AG04449 (cell line): ENCODE measurements at regions of chr2 and their contacts with region 1.

Region 1: GRCh38 chr2:234135720-234136221 is 85.3 kb downstream of the SPP2 start:
- DNase-seq: peak; percentile 31
- H3K4me3 ChIP-seq: no peak overlapping the region
- CTCF ChIP-seq: peak; percentile 72

Region 2: GRCh38 chr2:233976690-233977294 is 159.0 kb before region 1 on chr2:
- CTCF ChIA-PET with region 1: interaction called, 22 read pairs
- POLR2A ChIA-PET with region 1: interaction called, 3 read pairs
- DNase-seq: peak; percentile 17
- H3K4me3 ChIP-seq: no peak overlapping the region
- CTCF ChIP-seq: peak; percentile 49

Region 3: DNA sequence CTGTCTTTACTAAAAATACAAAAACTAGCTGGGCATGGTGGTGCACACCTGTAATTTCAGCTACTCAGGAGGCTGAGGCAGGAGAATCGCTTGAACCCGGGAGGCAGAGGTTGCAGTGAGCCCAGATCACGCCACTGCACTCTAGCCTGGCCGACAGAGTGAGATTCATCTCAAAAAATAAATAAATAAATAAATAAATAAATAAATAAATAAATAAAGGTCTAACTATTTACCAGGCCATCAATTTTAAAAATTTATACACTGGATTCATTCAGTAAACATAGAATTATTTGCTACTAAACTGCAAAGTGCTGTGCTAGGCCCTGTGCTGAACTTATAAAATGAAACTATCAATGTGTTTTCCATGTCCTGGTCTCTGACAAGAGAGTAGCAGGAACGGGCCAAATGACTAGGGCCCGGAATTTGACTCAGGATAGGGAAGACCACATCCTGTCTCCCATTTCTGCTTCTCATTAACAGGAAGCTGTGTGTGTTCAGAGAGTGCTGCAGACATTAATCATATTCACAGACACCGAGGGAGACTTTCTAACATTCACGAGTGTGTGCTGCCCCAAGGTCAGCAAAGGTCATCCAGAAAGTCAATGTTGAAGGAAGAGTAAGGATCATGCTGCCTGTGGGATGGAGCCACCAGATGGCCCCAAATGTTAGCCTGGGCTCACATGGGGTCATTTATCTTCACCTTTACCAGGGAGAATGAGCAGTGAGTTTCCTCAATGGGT is 10.5 kb after region 1 on chr2:
- CTCF ChIA-PET with region 1: interaction called, 11 read pairs
- POLR2A ChIA-PET with region 1: no interaction called
- DNase-seq: peak; percentile 55
- H3K4me3 ChIP-seq: no peak overlapping the region
- CTCF ChIP-seq: no peak

Region 4: DNA sequence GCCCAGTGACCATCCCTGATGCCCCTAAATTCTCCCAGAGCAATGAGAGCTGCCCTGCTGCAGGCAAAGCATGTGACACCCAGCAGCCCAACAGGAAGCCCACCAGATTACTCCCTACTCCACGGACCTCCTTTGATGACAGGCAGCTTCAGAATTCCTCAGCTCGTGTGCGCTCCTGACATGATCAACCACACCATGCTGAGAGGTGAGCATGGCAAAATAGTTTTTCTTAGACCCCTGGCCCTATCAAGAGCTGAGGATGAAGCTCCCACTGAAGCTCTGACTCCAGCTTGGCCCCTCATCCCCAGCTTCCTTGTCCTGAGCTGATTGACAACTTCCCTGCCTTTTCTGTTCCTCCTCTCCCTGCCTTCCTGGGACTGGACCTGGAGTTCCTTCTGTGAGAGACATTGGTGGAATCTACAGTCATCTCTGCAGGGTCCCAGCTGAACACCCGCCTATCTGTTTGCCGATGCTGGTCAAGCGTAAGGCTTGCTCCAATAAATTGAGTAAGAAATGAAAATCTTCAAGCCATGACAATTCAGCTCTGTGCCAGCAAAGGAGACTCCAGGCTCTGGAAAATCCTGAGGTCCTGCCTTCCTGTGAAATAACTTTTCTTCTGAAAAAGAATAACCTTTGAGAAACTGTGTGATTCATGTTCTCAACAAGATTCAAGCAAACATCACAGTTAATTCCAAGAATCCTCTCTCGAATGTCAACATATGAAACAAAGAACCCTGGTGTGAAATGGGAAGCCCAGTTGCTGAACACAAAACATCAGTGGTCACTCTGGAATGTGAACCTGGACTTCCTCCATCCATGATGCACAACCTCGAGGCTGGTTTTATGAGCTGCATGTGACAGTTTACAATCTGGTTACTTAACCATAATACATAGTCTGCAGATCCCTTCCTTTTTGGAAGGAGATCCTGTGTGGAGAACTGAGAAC is 115.8 kb after region 1 on chr2:
- CTCF ChIA-PET with region 1: interaction called, 50 read pairs
- POLR2A ChIA-PET with region 1: no interaction called
- DNase-seq: peak; percentile 93
- H3K4me3 ChIP-seq: no peak overlapping the region
- CTCF ChIP-seq: no peak

Region 5: DNA sequence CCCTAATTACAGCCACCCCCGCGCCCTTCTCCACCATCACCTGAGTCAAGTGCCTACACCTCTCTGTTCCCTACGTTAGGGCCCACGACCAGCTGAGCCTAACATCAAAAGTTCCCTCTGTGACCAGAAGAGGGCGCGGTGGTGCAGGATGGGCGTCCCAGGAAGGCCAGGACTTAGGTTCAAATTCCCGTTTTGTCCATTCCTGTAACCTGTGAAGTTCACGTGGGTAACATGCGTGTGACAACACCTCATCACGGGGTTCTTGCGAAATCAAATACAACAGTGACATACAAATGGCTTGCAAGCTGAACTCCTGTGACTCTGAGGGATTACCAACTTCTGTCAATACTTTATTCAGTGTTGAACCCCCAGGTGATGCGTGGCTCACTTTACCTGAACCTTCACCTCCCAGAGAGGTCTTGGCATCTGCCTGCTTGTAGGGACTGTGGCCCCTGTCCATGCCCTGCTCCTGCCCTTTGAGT is 153.2 kb after region 1 on chr2:
- CTCF ChIA-PET with region 1: interaction called, 26 read pairs
- POLR2A ChIA-PET with region 1: interaction called, 3 read pairs
- DNase-seq: no peak
- H3K4me3 ChIP-seq: no peak overlapping the region
- CTCF ChIP-seq: peak; percentile 74

Region 6: DNA sequence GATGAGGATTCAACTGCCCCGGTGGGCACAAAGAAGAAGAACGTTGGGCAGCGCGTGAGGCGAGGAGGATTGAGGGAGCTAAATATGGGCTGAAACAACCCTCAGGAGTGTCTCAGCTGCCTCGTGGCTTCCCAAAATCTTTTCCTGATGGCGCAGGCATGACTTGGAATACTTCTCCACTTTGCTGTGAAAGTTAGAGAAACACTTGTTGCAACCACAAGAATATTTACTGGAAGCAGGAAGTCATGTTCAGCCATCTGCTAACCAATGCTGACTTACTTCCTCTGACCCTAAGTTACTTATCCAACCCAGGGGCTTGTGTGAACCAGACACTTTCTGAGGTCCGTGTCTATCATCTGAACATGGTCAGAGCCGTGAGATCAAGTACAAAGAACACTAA is 212.3 kb after region 1 on chr2:
- CTCF ChIA-PET with region 1: no interaction called
- POLR2A ChIA-PET with region 1: no interaction called
- DNase-seq: no peak
- H3K4me3 ChIP-seq: no peak overlapping the region
- CTCF ChIP-seq: no peak

Region 7: DNA sequence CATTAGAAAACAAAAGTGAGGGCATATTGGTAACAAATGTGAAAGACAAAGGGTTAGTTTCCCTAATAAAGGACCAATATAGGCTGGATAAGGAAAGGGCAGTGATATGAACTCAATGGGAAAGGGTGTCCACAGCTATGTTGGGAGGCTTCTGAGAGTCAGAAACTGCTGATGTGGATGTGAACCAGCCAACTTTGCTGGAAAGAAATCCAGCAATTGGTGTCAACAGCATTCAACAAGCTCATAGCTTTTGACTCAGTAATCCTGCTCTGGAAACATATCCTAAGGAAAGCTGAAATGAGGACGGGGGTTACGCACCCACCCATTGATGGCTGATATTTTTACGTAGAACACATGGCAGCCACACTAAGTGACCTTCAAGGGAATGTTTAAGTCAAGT is 297.4 kb after region 1 on chr2:
- CTCF ChIA-PET with region 1: no interaction called
- POLR2A ChIA-PET with region 1: no interaction called
- DNase-seq: no peak
- H3K4me3 ChIP-seq: no peak overlapping the region
- CTCF ChIP-seq: no peak

Region 8: GRCh38 chr2:234500394-234501006 is 364.7 kb after region 1 on chr2:
- CTCF ChIA-PET with region 1: interaction called, 63 read pairs
- POLR2A ChIA-PET with region 1: interaction called, 3 read pairs
- DNase-seq: no peak
- H3K4me3 ChIP-seq: no peak overlapping the region
- CTCF ChIP-seq: peak; percentile 46

Region 9: DNA sequence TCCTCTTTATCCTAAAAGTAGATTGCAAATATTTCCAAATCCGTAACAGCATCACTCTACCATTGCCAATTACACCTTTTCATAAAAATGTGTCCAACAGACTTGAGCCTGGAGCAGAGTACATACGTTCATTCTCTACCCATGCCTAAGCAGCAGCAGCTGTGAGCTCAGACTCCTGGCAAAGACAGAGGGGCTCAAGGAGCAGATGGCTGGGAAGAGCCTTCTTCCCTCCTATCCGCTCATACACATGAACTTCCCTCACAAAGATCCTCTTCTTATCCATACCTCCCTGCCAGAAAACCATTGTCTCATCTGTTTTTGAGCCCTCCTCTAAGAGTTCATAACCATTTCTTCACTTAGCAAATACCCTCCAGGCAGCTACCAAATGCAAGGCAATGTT is 525.4 kb after region 1 on chr2:
- CTCF ChIA-PET with region 1: no interaction called
- POLR2A ChIA-PET with region 1: no interaction called
- DNase-seq: no peak
- H3K4me3 ChIP-seq: no peak overlapping the region
- CTCF ChIP-seq: no peak

Region 10: DNA sequence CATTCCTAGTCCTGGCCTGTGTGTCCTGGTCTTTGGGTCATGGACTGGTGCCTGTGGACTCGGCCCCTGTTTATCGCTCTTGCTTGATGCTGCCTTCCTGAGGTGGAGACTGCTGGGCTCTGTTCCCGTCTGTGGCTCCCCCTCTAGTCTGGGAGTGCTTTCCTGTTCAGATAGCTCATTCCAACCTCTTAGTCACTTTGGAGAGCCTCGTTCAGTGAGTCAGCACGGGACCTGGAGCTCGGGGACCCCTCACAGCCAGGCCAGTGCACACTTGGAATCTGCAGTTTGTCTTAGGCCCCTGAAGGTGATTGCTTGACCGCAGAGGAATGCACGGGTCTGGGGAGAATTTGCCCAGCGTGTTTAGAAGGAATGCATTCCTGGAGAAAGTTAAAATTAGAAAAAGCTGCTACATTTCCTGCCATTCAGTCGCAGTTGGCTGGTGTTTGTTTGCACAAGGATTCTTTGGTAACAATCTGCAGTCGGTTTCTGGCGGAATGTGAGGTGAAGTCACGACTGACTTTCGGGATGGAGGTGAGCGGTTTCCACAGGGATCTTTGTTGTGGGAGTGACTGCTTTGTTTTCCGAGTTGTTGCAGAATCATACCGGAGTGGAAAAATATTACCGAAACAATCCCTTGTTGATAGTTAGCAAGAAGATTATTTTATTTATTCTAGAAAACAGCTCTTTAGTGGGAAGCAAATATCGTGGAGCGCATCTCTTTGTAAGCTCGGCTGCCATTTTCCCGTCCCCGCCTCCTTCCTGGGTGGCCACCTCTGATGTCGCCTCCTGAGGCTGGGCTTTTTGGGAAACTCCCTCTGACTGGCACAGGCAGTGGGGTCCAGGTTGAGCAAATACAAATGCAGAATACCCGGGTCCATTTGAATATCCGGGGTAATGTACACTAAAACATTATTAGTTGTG is 845.7 kb after region 1 on chr2:
- CTCF ChIA-PET with region 1: no interaction called
- POLR2A ChIA-PET with region 1: no interaction called
- DNase-seq: peak; percentile 98
- H3K4me3 ChIP-seq: peak overlapping the region; percentile 34
- CTCF ChIP-seq: peak; percentile 31